Activated CD8-positive, alpha-beta memory T cell treated with anti-CD3 and anti-CD28 coated beads, Interleukin-2, amount 10 ng/mL, durations not matched to agents 7 days and 5 days (primary cell): ENCODE measurements at regions of chr12 and their contacts with region 1.

Region 1: GRCh38 chr12:7933255-7933729 is 2.7 kb downstream of the SLC2A3 start:
- DNase-seq: peak; percentile 89
- ATAC-seq: peak; percentile 68
- H3K4me3 Mint-ChIP-seq: no peak overlapping the region
- H3K27ac Mint-ChIP-seq: no peak overlapping the region
- H3K4me1 Mint-ChIP-seq: peaks cover 32% of the 10 kb centered on the region
- H3K27me3 Mint-ChIP-seq: no peaks in the 10 kb centered on the region

Region 2: GRCh38 chr12:7916936-7917335 is 16.4 kb before region 1 on chr12:
- CTCF ChIA-PET with region 1: interaction called, 17 read pairs
- DNase-seq: no peak
- ATAC-seq: peak; percentile 12
- H3K4me3 Mint-ChIP-seq: no peak overlapping the region
- H3K27ac Mint-ChIP-seq: no peak overlapping the region
- H3K4me1 Mint-ChIP-seq: peaks cover 37% of the 10 kb centered on the region
- H3K27me3 Mint-ChIP-seq: no peaks in the 10 kb centered on the region

Region 3: DNA sequence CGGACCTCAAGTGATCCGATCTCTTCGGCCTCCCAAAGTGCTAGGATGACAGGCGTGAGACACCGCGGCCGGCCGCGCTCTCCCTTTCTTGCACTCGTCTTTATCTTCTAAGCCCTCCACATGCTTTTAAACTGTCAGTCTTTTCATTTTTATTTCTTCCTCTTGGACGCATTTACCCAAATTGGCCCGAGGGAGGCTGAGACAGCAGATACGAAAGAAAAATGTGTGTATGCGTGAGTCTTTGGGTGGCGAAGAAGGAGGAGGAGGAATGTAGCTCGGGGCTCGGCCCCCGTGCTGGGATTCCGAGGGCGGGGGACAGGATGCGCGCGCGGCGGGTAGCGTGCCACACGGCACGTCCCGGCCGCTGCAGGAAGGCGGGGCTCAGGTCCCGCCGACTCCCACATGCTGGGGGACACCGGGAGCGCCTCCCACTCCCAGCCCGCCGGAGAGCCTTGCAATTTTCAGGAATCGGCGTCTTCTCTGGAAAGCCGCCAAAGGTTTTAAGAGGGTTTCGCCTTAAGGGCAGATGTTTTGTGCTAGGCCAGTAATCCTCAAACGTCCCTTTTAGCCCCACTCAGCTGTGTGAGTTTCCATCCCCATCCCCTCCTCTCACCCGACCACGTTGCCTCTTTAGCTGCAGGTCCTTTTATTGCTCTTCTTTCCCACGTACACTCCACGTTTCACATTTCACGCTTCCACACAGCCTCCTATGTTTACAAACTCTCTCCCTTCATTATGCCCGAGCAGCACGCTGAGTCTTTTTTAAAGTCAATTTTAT is 37.4 kb after region 1 on chr12:
- CTCF ChIA-PET with region 1: interaction called, 353 read pairs
- DNase-seq: peak; percentile 93
- ATAC-seq: peak; percentile 94
- H3K4me3 Mint-ChIP-seq: peak overlapping the region; percentile 78
- H3K27ac Mint-ChIP-seq: peak overlapping the region; percentile 94
- H3K4me1 Mint-ChIP-seq: peaks cover 38% of the 10 kb centered on the region
- H3K27me3 Mint-ChIP-seq: no peaks in the 10 kb centered on the region

Region 4: GRCh38 chr12:7995266-7995963 is 62.1 kb after region 1 on chr12:
- CTCF ChIA-PET with region 1: interaction called, 78 read pairs
- DNase-seq: peak; percentile 91
- ATAC-seq: peak; percentile 96
- H3K4me3 Mint-ChIP-seq: no peak overlapping the region
- H3K27ac Mint-ChIP-seq: no peak overlapping the region
- H3K4me1 Mint-ChIP-seq: peaks cover 22% of the 10 kb centered on the region
- H3K27me3 Mint-ChIP-seq: no peaks in the 10 kb centered on the region

Region 5: GRCh38 chr12:8123124-8123912 is 190.0 kb after region 1 on chr12 and contains the start of gene CLEC4A:
- CTCF ChIA-PET with region 1: no interaction called
- DNase-seq: no peak
- ATAC-seq: no peak
- H3K4me3 Mint-ChIP-seq: no peak within 1 kb of the TSS
- H3K27ac Mint-ChIP-seq: no peak within 1 kb of the TSS
- H3K4me1 Mint-ChIP-seq: peaks cover 6% of the 10 kb centered on the region
- H3K27me3 Mint-ChIP-seq: no peaks in the 10 kb centered on the region
- total RNA-seq, gene CLEC4A: 0.19 to 0.79 TPM